Esophagus muscularis mucosa (tissue), 4 donors: ENCODE measurements at regions of chr10 and their contacts with region 1.

Region 1: GRCh38 chr10:122380703-122381102 is 6.2 kb downstream of the PLEKHA1 start:
- DNase-seq: no peak
- H3K4me3 ChIP-seq: no peak overlapping the region
- H3K27ac ChIP-seq: no peak overlapping the region
- H3K4me1 ChIP-seq: peaks cover 20 to 44% (median 37%) of the 10 kb centered on the region in 4 donors
- H3K27me3 ChIP-seq: no peaks in the 10 kb centered on the region
- CTCF ChIP-seq: no peak
- EP300 ChIP-seq: no peak
- POLR2A ChIP-seq: no peak

Region 2: DNA sequence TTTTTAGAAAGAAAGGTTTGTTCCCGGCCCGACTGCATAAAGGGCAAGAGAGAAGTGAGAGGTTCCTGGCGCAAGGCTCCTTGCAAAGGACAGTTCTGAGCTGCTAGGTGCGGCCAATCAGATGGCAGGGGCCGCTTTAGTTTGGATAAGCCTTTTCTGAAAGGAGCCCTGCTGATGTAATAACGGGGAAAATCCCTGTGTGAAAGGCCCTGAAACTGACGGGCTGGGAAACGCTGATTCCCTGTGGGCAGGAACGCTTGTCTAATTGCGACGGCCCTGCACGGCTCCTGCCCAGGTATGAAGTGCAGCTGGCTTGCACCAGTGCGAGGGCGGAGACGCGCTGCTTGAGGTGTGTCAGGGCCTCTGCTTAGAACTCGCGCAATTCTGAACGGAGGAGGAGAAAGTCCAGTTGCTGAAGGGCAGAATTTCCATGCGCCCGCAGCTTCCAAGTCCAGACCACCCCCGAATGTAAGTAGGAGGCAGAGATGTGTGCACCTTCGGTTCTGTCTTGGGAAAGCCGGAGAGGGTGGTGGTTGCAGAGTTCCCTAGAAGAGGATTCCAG is 361.2 kb before region 1 on chr10:
- intact Hi-C with region 1: no loop called
- DNase-seq: no peak
- H3K4me3 ChIP-seq: peak overlapping the region in 1 of 4 donors; percentile 31
- H3K27ac ChIP-seq: peak overlapping the region; percentile 83 to 88 (median 85)
- H3K4me1 ChIP-seq: peaks cover 5 to 41% (median 31%) of the 10 kb centered on the region in 4 donors
- H3K27me3 ChIP-seq: no peaks in the 10 kb centered on the region
- CTCF ChIP-seq: no peak
- EP300 ChIP-seq: no peak
- POLR2A ChIP-seq: no peak

Region 3: GRCh38 chr10:122419876-122420623 is 39.3 kb after region 1 on chr10:
- intact Hi-C with region 1: loop called (anchors 5 kb)
- DNase-seq: no peak
- H3K4me3 ChIP-seq: no peak overlapping the region
- H3K27ac ChIP-seq: peak overlapping the region; percentile 70 to 79 (median 74)
- H3K4me1 ChIP-seq: peaks cover 37 to 61% (median 52%) of the 10 kb centered on the region in 4 donors
- H3K27me3 ChIP-seq: no peaks in the 10 kb centered on the region
- CTCF ChIP-seq: no peak
- EP300 ChIP-seq: no peak
- POLR2A ChIP-seq: no peak